Mucosa of descending colon (tissue), 3 donors: ENCODE measurements at regions of chr5 and their contacts with region 1.

Region 1: GRCh38 chr5:671459-672328 is 21.5 kb downstream of the TPPP start:
- DNase-seq: peak in 2 of 3 donors; percentile 86
- ATAC-seq: peak; percentile 79
- H3K4me3 ChIP-seq: no peak overlapping the region
- H3K4me1 ChIP-seq: peaks cover 33% of the 10 kb centered on the region
- CTCF ChIP-seq: peak; percentile 95

Region 2: GRCh38 chr5:683551-684481 is 12.1 kb after region 1 on chr5:
- intact Hi-C with region 1: no loop called
- DNase-seq: peak in 1 of 3 donors; percentile 37
- ATAC-seq: no peak
- H3K4me3 ChIP-seq: no peak overlapping the region
- H3K4me1 ChIP-seq: no peaks in the 10 kb centered on the region
- CTCF ChIP-seq: no peak

Region 3: GRCh38 chr5:902129-902916 is 230.6 kb after region 1 on chr5:
- intact Hi-C with region 1: loop called in 1 of 2 experiments (anchors 5 kb)
- DNase-seq: no peak
- ATAC-seq: no peak
- H3K4me3 ChIP-seq: no peak overlapping the region
- H3K4me1 ChIP-seq: no peaks in the 10 kb centered on the region
- CTCF ChIP-seq: no peak